Activated CD4-positive, alpha-beta memory T cell treated with anti-CD3 and anti-CD28 coated beads, Interleukin-2, amount 10 ng/mL, durations not matched to agents 7 days and 5 days (primary cell): ENCODE measurements at regions of chr3 and their contacts with region 1.

Region 1: GRCh38 chr3:46629551-46630517 is 17.5 kb downstream of the FAM240A start:
- DNase-seq: peak; percentile 82
- H3K4me3 Mint-ChIP-seq: peak overlapping the region; percentile 16
- H3K27ac Mint-ChIP-seq: no peak overlapping the region
- H3K4me1 Mint-ChIP-seq: peaks cover 19% of the 10 kb centered on the region
- H3K27me3 Mint-ChIP-seq: peaks cover under 1% of the 10 kb centered on the region

Region 2: GRCh38 chr3:46496741-46497554 is 132.9 kb before region 1 on chr3:
- CTCF ChIA-PET with region 1: interaction called, 32 read pairs
- POLR2A ChIA-PET with region 1: interaction called, 3 read pairs
- DNase-seq: peak; percentile 66
- H3K4me3 Mint-ChIP-seq: no peak overlapping the region
- H3K27ac Mint-ChIP-seq: no peak overlapping the region
- H3K4me1 Mint-ChIP-seq: peaks cover 3% of the 10 kb centered on the region
- H3K27me3 Mint-ChIP-seq: peaks cover 3% of the 10 kb centered on the region

Region 3: DNA sequence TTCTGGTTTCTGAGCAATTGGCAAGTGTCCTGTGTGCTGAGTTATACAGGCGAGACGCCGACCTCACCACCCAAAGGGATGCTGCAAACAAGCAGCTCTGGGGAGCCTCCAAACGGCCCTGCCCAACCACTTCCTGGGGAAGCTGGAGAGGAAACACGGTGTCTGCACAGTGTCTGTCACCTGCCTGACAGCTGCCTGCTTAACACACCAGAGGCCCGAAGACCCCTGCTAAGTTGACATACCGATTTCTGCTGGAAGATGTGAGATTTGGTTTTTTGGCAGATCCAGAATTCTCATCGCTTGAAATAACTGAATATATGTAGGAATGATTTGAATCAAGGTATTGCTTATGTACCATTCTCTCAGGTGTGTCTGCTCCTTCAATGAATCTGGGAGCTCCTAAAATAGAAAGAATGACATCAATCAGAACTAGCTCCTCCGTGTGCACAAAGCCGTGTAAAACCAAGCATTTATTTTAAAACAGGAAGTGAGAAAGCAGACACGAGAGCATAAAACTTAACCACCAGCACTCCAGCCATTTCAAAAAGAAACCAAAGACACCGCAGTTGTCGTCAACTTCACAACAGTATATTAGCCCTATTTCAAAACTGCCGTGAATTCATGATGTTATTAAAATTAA is 90.9 kb before region 1 on chr3:
- CTCF ChIA-PET with region 1: interaction called, 14 read pairs
- POLR2A ChIA-PET with region 1: interaction called, 6 read pairs
- DNase-seq: peak; percentile 92
- H3K4me3 Mint-ChIP-seq: peak overlapping the region; percentile 57
- H3K27ac Mint-ChIP-seq: peak overlapping the region; percentile 83
- H3K4me1 Mint-ChIP-seq: peaks cover 73% of the 10 kb centered on the region
- H3K27me3 Mint-ChIP-seq: peaks cover 13% of the 10 kb centered on the region

Region 4: GRCh38 chr3:46558184-46559043 is 71.4 kb before region 1 on chr3:
- CTCF ChIA-PET with region 1: interaction called, 32 read pairs
- POLR2A ChIA-PET with region 1: no interaction called
- DNase-seq: peak; percentile 77
- H3K4me3 Mint-ChIP-seq: peak overlapping the region; percentile 54
- H3K27ac Mint-ChIP-seq: no peak overlapping the region
- H3K4me1 Mint-ChIP-seq: peaks cover 27% of the 10 kb centered on the region
- H3K27me3 Mint-ChIP-seq: peaks cover 45% of the 10 kb centered on the region

Region 5: DNA sequence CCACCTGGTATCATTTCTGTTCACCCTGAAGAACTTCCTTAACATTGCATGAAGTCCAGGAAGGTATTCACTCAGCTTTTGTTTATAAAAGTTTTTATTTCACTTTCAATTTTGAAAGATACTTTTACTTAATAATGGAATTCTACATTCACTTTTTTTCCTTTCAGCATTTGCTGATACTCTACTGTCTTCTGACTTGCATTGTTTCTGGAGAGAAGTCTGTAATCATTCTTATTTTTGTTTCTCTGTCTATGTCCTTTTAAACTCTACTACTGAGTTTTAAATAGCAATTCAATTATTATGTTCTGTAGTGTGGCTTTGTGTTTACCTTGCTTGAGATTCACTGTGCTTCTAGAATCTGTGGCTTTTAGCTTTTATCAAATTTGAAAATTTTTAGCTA is 191.0 kb after region 1 on chr3:
- CTCF ChIA-PET with region 1: no interaction called
- POLR2A ChIA-PET with region 1: no interaction called
- DNase-seq: no peak
- H3K4me3 Mint-ChIP-seq: no peak overlapping the region
- H3K27ac Mint-ChIP-seq: no peak overlapping the region
- H3K4me1 Mint-ChIP-seq: peaks cover 3% of the 10 kb centered on the region
- H3K27me3 Mint-ChIP-seq: peaks cover 12% of the 10 kb centered on the region